GM10248 (cell line): ENCODE measurements at regions of chr1 and their contacts with region 1.

Region 1: DNA sequence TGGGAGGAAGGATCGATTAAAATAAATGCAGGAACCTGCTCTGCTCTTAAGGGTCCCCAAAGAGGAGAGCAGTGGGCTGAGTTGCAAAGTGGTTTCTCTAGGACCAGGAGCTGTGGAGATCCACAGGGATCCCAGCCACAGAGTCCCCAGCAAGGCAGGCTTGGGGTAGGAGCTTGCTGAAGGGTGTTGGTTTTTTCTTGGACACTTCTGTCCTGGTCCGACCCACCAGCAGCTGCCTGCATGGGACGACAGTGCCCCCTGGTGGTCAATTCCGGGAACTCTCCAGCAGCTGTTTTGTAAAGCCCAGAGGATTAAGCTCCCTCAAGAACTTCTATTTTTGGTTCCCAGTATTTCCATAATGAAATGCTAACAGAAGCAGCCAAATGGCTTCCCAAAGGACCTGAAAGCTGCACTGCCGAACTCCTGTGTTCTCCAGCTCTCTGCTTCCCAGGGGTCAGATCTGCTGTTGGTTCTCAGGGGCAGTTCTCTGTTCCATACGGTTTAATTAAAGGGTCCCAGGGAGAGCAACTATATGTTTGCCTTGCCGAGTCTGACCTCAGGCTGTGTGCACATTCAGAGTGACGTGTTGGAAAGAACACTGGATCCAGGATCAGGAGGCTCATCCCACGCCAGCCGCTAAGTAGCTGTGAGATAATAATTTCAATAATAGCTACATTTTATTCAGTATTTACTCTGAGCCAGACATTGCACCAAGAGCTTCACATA is 23.2 kb downstream of the NENF start:
- DNase-seq: peak; percentile 82
- CTCF ChIP-seq: peak; percentile 90

Region 2: DNA sequence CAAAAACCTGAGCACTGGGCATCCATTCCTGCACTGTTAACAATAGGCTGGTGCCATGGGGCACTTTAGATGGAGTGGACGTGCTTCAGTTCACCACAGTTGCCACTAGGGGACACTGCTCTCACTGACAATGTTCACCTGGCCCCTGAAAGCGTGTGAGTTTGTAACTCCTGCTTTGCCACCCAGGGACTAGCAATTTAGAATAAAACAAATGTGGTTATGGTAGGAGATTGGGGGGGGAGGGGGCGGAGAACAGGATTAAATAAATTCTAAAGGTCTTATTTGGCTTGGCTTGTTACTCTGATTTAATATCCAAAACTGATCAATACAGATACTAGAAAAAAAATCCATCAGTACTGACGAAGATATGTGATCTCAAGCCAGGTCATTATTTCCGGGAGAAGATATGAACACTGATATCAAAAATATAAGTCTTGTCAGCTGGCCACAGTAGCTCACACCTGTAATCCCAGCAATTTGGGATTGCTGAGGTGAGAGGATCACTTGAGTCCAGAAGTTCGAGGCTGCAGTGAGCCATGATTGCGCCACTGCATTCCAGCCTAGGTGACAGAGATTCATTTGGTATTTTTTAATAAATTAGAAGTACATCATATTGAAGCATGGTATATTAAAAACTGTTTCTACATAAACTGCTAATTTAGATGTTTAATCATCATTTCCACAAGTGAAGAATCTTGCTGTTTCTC is 443.8 kb before region 1 on chr1:
- CTCF ChIA-PET with region 1: interaction called, 18 read pairs
- POLR2A ChIA-PET with region 1: no interaction called
- DNase-seq: peak; percentile 70
- CTCF ChIP-seq: peak; percentile 92

Region 3: GRCh38 chr1:212070720-212071302 is 385.2 kb before region 1 on chr1:
- CTCF ChIA-PET with region 1: interaction called, 221 read pairs
- POLR2A ChIA-PET with region 1: no interaction called
- DNase-seq: peak; percentile 32
- CTCF ChIP-seq: peak; percentile 63

Region 4: DNA sequence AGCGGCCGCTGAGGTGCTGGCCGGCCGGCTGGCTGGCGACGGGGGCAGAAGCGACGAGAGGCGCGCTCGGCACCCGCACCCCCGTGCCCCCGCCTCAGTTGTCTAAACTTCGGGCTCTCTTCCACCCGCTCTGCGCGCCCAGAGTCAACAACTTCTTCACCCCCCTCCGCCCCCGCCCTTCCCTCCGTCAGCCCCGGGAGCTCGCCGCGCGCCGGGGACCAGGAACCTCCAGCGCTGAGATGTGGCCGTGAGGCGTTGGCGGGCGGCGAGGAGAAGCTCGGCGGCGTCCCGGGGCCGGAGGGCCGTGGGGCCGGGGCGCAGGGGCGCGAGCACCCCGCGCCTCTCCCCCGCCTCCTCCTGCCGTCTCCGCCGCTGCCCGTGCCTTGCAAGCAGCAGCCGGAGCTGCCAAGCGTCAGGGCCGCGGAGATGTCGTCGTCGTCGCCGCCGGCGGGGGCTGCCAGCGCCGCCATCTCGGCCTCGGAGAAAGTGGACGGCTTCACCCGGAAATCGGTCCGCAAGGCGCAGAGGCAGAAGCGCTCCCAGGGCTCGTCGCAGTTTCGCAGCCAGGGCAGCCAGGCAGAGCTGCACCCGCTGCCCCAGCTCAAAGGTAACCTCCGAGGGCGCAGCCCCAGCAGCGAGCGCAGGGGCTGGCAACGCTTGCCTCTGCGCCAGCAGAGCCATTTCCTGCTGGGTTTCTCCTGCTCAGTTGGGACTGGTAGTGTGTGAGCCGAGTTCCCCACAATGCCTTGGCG is 170.1 kb before region 1 on chr1:
- CTCF ChIA-PET with region 1: interaction called, 22 read pairs
- POLR2A ChIA-PET with region 1: no interaction called
- DNase-seq: peak; percentile 58
- CTCF ChIP-seq: no peak

Region 5: DNA sequence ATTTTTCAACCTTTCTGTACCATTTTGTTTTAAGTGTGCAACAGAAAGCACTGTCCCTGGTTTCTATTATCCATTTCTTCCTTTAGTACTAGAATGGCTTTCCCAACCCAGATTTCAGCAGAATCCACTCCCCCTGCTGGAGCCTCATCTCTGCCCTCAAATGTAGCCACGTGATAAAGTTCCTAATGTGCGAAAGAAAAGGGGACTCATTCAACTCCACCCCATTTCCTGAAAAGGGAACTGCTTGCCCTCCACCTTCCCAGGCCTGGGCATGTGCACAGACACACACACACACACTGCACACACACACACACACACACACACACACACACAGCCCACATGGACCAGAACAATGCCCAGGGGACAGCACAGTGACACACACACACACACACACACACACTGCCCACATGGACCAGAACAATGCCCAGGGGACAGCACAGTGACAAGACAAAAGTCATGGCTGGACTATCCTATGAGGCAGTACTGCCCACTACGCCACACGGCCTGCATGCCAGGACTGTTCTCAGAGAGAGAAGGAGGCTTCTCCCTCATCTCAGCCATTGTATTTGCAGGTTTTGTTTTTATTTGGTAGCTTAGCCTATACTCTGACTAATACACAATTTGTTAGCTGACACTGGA is 74.5 kb before region 1 on chr1:
- CTCF ChIA-PET with region 1: interaction called, 13 read pairs
- POLR2A ChIA-PET with region 1: no interaction called
- DNase-seq: no peak
- CTCF ChIP-seq: no peak

Region 6: GRCh38 chr1:212401838-212402582 is 54.0 kb before region 1 on chr1:
- CTCF ChIA-PET with region 1: no interaction called
- POLR2A ChIA-PET with region 1: no interaction called
- DNase-seq: no peak
- CTCF ChIP-seq: no peak

Region 7: GRCh38 chr1:212493551-212493950 is 37.6 kb after region 1 on chr1:
- CTCF ChIA-PET with region 1: no interaction called
- POLR2A ChIA-PET with region 1: no interaction called
- DNase-seq: no peak
- CTCF ChIP-seq: no peak

Region 8: DNA sequence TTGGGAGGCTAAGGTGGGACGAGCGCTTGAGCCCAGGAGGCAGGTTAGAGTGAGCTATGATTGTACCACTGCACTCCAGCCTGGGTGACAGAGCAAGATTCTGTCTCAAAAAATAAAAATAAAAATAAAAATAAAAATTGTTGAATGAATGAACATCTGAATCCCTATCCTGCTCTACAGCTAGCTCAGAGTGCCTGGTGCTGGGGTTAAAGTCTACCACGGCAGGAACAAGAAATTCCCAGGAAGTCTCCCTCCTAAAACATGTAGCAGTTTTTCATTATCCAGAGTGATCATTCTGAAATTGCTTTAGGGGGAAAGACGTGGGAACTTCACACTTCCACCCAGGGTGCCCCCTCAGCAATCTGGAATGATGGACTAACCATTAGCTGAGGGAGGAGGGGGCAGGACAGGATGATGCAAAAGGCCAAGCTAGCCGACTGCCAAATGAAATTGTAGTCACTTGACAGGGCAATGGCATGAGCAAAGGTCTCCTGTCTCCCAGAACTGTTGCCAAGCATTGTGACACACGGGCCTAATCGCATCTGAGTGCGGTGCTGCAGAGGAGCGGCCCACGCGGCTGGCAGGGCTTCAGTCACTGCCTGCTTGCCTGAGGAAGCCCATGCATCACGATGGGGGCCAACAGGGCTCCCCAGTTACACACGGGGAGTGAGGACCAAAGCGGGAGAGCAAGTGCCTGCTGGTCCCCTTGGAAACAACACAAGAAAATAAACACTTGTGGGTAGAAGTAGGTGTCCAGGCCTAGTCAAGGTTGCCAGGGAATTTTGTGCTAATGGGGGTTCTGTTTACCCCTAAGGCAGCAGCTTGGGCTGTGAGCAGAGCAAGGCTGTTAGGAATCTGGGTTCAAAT is 62.5 kb after region 1 on chr1:
- CTCF ChIA-PET with region 1: no interaction called
- POLR2A ChIA-PET with region 1: no interaction called
- DNase-seq: no peak
- CTCF ChIP-seq: no peak

Region 9: GRCh38 chr1:212630158-212630900 is 174.4 kb after region 1 on chr1:
- CTCF ChIA-PET with region 1: interaction called, 12 read pairs
- POLR2A ChIA-PET with region 1: no interaction called
- DNase-seq: peak; percentile 83
- CTCF ChIP-seq: peak; percentile 89